Keratinocyte (primary cell): ENCODE measurements at regions of chr18 and their contacts with region 1.

Region 1: GRCh38 chr18:830315-830901 is 18.4 kb upstream of the YES1 start:
- DNase-seq: no peak
- H3K4me3 ChIP-seq: no peak overlapping the region
- H3K27ac ChIP-seq: no peak overlapping the region
- H3K4me1 ChIP-seq: peaks cover 6% of the 10 kb centered on the region
- H3K27me3 ChIP-seq: no peaks in the 10 kb centered on the region
- CTCF ChIP-seq: no peak

Region 2: GRCh38 chr18:616380-616995 is 213.9 kb before region 1 on chr18:
- dilution Hi-C with region 1: no loop called
- DNase-seq: no peak
- H3K4me3 ChIP-seq: no peak overlapping the region
- H3K27ac ChIP-seq: no peak overlapping the region
- H3K4me1 ChIP-seq: no peaks in the 10 kb centered on the region
- H3K27me3 ChIP-seq: no peaks in the 10 kb centered on the region
- CTCF ChIP-seq: peak in 2 of 3 experiments; percentile 44 to 55

Region 3: GRCh38 chr18:744832-745597 is 85.4 kb before region 1 on chr18:
- dilution Hi-C with region 1: loop called (anchors 5 kb)
- DNase-seq: no peak
- H3K4me3 ChIP-seq: no peak overlapping the region
- H3K27ac ChIP-seq: no peak overlapping the region
- H3K4me1 ChIP-seq: no peaks in the 10 kb centered on the region
- H3K27me3 ChIP-seq: no peaks in the 10 kb centered on the region
- CTCF ChIP-seq: no peak